OCI-LY7 (cell line): ENCODE measurements at regions of chr11 and their contacts with region 1.

Region 1: GRCh38 chr11:128725630-128726319 is 31.9 kb downstream of the FLI1 start:
- DNase-seq: peak; percentile 95
- H3K4me3 ChIP-seq: peak overlapping the region; percentile 57
- H3K27ac ChIP-seq: peak overlapping the region; percentile 99
- H3K4me1 ChIP-seq: peaks cover 99% of the 10 kb centered on the region
- CTCF ChIP-seq: no peak

Region 2: DNA sequence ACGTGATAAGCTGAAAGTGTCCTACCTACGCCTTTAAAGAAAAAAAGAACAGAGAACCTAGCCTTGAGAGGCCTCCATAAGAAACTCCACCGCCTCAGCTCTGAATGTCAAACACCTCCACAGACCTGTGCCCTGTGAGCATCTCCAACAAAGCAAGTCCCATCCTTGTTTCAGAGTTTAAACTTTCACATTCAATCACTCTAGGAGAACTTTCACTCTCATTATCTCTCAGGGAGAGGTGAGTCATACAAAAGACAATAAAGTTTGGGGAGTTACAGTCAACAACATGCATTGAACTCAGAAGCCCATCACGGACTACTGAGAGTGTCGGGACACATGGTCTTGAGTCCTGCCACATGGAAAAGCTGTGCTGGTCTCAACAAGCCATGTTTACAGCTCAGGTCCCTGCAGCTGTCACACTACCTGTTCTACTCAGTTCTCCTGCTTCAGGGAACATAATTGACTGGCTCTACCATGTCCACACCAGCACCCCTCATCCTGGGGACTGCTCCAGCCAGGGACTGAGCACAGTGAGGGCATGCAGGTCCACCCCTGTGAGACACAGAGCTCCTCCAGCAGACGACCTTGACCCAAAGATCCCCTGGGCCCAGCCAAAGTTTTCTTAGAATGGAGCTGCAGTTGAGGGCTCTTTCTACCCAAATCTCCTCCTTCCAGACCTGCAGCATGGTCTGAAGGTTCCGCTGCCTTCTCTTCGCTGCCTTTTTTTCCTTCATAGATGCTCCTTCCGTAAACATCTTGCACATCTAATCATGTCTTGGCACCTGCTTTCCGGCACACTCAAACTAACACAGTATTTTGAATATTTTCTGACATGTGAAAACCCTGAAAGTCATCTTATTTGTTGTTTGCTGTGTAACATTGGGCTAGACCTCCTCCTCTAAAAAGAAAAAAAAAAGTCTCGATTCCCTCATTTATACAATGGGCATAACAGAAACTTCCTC is 253.4 kb before region 1 on chr11:
- CTCF ChIA-PET with region 1: no interaction called
- POLR2A ChIA-PET with region 1: interaction called, 3 read pairs
- intact Hi-C with region 1: loop called (anchors 2 kb)
- DNase-seq: peak; percentile 61
- H3K4me3 ChIP-seq: peak overlapping the region; percentile 51
- H3K27ac ChIP-seq: peak overlapping the region; percentile 98
- H3K4me1 ChIP-seq: peaks cover 100% of the 10 kb centered on the region
- CTCF ChIP-seq: no peak

Region 3: DNA sequence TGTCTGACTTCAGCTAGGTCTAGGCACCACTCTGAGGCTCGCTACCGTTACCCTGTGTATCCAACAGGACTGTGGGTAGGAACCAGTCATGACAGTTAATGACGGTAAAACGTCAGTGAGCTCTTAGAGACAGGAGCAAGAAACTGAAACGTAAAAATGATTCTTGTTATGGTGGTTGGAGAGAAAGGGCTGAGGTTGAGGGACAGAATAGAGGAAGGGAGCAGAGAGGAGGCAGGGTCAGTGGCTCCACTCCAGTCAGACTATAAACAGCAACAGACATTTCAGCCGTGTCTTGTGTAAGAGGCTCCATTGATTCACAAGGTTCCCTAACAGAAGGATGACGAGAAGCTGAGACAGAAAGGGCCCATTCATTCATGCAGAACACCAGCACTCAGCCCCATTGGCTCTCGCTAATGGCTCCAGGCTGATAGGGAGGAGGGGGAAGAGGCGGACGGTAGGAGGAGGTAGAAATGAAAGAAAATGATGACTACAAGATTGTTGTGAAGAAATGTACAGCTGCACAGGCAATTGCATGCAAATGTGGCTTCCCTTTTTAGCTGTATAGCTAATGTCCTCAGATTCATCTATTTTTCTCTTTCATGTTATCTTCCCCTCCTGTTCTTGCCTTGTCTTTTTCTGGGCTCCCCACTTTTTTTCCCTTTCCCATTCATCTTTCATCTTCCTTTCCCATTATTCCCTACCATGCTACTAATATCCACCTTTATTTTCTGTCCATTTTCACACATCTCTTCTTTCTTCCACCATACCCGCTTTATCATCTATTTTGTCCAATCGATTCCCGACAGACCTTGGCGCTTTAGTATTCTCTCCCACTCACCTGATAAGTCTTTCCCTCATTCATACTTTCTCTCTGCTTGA is 172.8 kb before region 1 on chr11:
- CTCF ChIA-PET with region 1: interaction called, 5 read pairs
- POLR2A ChIA-PET with region 1: interaction called, 9 read pairs
- intact Hi-C with region 1: loop called (anchors 2 kb)
- DNase-seq: peak; percentile 97
- H3K4me3 ChIP-seq: peak overlapping the region; percentile 61
- H3K27ac ChIP-seq: peak overlapping the region; percentile 97
- H3K4me1 ChIP-seq: peaks cover 80% of the 10 kb centered on the region
- CTCF ChIP-seq: no peak

Region 4: DNA sequence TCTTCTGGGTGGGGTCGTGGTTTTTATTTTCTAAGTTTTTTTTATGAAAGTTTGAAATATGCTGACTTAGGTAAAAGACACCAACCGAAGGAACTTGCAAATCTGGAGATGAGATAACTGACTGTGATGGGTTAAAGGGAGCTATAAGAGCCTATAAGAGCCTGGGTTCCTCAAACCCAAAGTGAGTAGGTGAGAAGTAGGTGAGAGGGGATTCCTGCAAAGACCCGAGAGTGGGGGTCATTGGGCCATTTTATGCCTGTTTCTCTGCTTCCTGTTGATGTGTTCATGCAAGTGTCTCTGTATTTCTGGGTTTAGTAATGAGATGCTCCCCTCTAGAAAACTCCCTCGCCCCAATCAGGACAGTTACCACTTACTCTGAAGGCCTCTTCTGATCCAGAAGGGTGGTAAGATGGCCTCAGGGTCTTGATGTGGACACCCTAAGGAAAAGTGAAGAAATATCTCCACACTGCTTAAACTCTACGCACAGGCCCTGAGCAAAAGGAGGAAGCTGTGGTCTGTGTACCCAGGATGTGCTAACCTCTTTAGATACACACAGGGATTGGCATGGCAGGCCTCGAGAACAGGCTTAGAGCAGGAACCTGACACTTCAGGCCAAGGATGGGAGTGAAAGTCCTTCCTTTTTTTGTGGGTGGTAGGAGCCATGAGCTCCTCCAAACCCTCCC is 30.1 kb before region 1 on chr11:
- CTCF ChIA-PET with region 1: interaction called, 8 read pairs
- POLR2A ChIA-PET with region 1: interaction called, 15 read pairs
- intact Hi-C with region 1: loop called (anchors 1 kb)
- DNase-seq: peak; percentile 78
- H3K4me3 ChIP-seq: peak overlapping the region; percentile 79
- H3K27ac ChIP-seq: peak overlapping the region; percentile 66
- H3K4me1 ChIP-seq: peaks cover 50% of the 10 kb centered on the region
- CTCF ChIP-seq: no peak

Region 5: DNA sequence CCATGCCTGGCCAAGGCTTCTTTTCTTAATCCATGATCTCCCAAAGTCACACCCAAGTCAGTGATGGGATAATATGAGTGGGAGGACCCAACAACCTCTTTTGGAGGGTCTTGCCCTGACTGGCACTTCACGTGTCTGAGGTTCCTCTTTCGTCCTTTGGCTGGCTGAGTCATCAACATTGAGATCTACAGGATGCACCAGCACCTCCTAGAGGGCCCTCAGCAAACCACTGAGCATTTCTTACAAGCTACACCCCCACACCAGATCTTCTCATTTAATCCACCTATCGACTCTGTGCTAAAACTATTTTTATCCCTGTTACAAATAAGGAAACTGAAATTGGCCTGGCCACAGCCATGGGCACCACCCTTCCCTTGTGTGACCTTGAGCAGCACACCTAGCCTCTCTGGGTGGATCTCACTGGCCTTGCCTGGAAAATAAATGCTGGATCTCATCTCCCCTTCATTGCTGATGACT is 31.5 kb after region 1 on chr11:
- CTCF ChIA-PET with region 1: interaction called, 4 read pairs
- POLR2A ChIA-PET with region 1: interaction called, 11 read pairs
- intact Hi-C with region 1: loop called (anchors 1 kb)
- DNase-seq: peak; percentile 88
- H3K4me3 ChIP-seq: no peak overlapping the region
- H3K27ac ChIP-seq: peak overlapping the region; percentile 9
- H3K4me1 ChIP-seq: peaks cover 53% of the 10 kb centered on the region
- CTCF ChIP-seq: peak; percentile 93

Region 6: DNA sequence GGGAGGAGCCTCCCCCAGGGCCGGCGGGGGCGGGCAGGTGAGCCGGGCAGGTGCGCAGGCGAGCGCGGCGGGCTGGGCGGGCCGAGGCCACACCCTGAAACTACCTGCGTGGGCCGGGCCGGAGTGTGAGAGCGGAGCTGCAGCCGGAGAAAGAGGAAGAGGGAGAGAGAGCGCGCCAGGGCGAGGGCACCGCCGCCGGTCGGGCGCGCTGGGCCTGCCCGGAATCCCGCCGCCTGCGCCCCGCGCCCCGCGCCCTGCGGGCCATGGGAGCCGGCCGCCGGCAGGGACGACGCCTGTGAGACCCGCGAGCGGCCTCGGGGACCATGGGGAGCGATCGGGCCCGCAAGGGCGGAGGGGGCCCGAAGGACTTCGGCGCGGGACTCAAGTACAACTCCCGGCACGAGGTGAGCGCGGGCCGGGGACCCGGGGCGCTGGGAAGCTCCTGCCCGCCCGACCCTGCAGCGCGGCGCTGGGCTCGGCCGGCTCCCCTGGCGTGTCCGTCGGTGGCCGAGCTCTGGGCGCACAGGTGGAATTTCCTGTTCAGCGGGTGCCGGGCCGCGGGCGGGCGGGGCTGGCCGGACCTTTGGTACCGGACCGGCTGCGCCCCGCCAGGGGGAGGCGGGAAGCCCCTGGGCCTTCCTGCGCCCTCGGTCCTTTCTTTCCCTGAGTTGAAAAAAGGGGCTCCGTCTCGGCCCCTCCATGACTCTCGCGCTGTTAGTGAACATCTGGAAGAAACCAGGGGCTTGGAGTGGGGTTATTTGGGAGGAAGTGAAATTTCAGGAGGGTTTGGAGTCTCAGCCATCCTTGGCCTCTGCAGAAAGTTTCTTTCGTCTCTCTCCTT is 1434.1 kb after region 1 on chr11 and contains the start of gene ST14:
- CTCF ChIA-PET with region 1: no interaction called
- POLR2A ChIA-PET with region 1: no interaction called
- intact Hi-C with region 1: loop called (anchors 10 kb)
- DNase-seq: peak; percentile 70
- H3K4me3 ChIP-seq: peak within 1 kb of the TSS; percentile 74
- H3K27ac ChIP-seq: peak within 1 kb of the TSS; percentile 93
- H3K4me1 ChIP-seq: peaks cover 76% of the 10 kb centered on the region
- CTCF ChIP-seq: no peak; the same call in 1 of the 2 replicates
- total RNA-seq, gene ST14: 110 and 135 TPM in 2 replicates